ENCODE measurements at regions of chr4 and their contacts with region 1.

Region 1: GRCh38 chr4:121192480-121192879 is 28.4 kb upstream of the TNIP3 start:
- DNase-seq: no peak
- ATAC-seq: no peak
- H3K4me3 Mint-ChIP-seq: peak overlapping the region; percentile 6
- H3K27ac Mint-ChIP-seq: peak overlapping the region; percentile 60
- H3K4me1 Mint-ChIP-seq: peaks cover 53% of the 10 kb centered on the region
- H3K27me3 Mint-ChIP-seq: no peaks in the 10 kb centered on the region

Region 2: GRCh38 chr4:121118344-121118743 is 74.1 kb before region 1 on chr4:
- CTCF ChIA-PET with region 1: interaction called, 23 read pairs
- POLR2A ChIA-PET with region 1: interaction called, 3 read pairs
- DNase-seq: no peak
- ATAC-seq: no peak
- H3K4me3 Mint-ChIP-seq: no peak overlapping the region
- H3K27ac Mint-ChIP-seq: no peak overlapping the region
- H3K4me1 Mint-ChIP-seq: peaks cover 35% of the 10 kb centered on the region
- H3K27me3 Mint-ChIP-seq: no peaks in the 10 kb centered on the region

Region 3: GRCh38 chr4:121150486-121150885 is 42.0 kb before region 1 on chr4:
- CTCF ChIA-PET with region 1: interaction called, 17 read pairs
- POLR2A ChIA-PET with region 1: interaction called, 7 read pairs
- DNase-seq: no peak
- ATAC-seq: no peak
- H3K4me3 Mint-ChIP-seq: no peak overlapping the region
- H3K27ac Mint-ChIP-seq: no peak overlapping the region
- H3K4me1 Mint-ChIP-seq: peaks cover 60% of the 10 kb centered on the region
- H3K27me3 Mint-ChIP-seq: no peaks in the 10 kb centered on the region

Region 4: GRCh38 chr4:121168446-121169281 is 23.8 kb before region 1 on chr4:
- CTCF ChIA-PET with region 1: interaction called, 14 read pairs
- POLR2A ChIA-PET with region 1: no interaction called
- DNase-seq: no peak
- ATAC-seq: no peak
- H3K4me3 Mint-ChIP-seq: no peak overlapping the region
- H3K27ac Mint-ChIP-seq: no peak overlapping the region
- H3K4me1 Mint-ChIP-seq: peaks cover 43% of the 10 kb centered on the region
- H3K27me3 Mint-ChIP-seq: no peaks in the 10 kb centered on the region

Region 5: DNA sequence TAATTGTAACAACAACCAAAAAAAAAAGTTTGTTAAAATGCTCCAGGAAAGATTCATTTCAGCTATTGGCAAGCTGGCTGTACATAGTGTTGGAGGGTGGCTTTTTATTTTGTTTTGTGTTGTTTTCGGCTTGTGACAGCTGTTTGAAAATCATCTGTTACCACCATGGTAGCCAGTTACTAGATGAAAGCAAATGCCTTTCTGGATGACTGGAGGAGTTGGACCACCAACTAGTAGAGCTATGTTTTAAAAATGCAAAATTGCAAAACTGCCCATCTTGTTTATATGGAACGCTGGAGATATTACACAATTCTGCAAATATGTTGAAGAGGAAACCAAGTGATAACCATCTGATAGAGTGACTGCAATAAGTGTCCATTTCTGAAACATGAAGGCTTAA is 24.9 kb after region 1 on chr4:
- CTCF ChIA-PET with region 1: interaction called, 51 read pairs
- POLR2A ChIA-PET with region 1: interaction called, 3 read pairs
- DNase-seq: no peak
- ATAC-seq: no peak
- H3K4me3 Mint-ChIP-seq: no peak overlapping the region
- H3K27ac Mint-ChIP-seq: no peak overlapping the region
- H3K4me1 Mint-ChIP-seq: peaks cover 28% of the 10 kb centered on the region
- H3K27me3 Mint-ChIP-seq: no peaks in the 10 kb centered on the region

Region 6: DNA sequence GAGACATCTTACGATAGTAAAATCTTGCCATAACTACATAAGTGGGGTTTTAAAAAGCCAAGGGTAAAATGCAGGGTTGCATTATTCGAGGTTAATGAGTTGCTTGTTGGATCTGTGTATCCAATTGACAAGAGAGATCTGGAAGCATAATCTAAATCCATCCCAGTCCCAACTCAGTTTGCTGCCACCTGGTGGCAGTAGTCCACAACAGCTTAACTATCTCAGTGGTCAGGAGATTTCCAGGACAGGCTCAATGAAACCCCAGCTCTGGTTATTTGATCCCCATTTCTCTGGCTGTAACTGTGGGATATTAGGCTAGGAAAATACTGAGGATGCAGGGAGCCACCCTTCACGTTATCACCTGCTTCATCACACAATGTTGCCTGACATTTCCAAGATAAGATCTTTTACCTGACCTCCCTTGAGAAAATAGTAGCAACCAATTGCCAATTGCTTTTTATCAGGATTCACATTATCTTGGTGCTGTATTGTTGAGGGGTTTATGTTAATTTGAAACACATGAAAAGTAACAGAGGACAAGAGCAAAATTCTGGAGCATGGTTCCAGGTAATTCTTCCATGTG is 59.8 kb after region 1 on chr4:
- CTCF ChIA-PET with region 1: interaction called, 130 read pairs
- POLR2A ChIA-PET with region 1: interaction called, 3 read pairs
- DNase-seq: peak; percentile 69
- ATAC-seq: no peak
- H3K4me3 Mint-ChIP-seq: no peak overlapping the region
- H3K27ac Mint-ChIP-seq: no peak overlapping the region
- H3K4me1 Mint-ChIP-seq: peaks cover 55% of the 10 kb centered on the region
- H3K27me3 Mint-ChIP-seq: no peaks in the 10 kb centered on the region

Region 7: DNA sequence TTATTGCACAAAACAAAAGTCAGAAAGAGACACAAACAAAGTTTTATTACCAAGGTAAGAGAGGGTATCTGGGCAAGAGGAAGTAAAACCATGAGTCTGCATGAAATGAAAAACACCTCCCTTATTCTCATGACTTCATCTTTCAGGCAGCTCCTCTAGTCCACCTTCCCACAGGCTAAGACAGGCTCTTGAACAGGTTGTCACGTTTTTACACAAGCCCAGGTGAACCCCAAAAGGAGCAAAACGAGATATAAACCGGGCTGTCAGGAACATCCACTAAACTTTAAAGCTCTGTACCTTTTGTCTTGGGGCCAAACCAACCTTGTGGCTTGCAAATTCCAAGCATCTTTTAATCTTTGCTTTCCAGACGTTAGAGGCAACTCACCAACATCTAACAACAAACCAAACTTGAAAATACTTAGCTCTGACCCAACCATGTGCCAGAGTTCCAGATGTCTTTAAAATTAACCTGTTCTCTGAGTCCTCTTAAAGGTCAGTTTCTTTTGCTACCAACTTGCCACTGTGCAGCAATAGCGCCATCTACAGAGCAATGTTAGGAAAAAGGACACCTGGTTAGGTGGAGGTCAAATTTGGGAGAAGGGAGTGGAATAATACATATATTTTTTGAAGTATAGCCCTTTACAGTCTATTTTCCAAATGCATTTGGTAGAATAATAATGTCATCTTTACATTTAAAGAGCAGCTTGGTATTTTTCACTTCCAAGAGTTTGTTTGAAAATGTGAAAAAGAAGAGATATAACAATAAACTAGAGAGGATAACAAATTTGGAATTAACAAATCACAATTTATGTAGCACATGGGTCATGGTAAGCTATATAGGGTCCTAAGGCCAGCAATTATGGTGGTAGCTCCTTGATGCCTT is 115.2 kb after region 1 on chr4:
- CTCF ChIA-PET with region 1: interaction called, 129 read pairs
- POLR2A ChIA-PET with region 1: interaction called, 7 read pairs
- DNase-seq: peak; percentile 66
- ATAC-seq: peak; percentile 61
- H3K4me3 Mint-ChIP-seq: no peak overlapping the region
- H3K27ac Mint-ChIP-seq: no peak overlapping the region
- H3K4me1 Mint-ChIP-seq: peaks cover 20% of the 10 kb centered on the region
- H3K27me3 Mint-ChIP-seq: peaks cover 3% of the 10 kb centered on the region